Activated CD4-positive, alpha-beta memory T cell treated with anti-CD3 and anti-CD28 coated beads, Interleukin-2, amount 10 ng/mL, durations not matched to agents 7 days and 5 days (primary cell): ENCODE measurements at regions of chr4 and their contacts with region 1.

Region 1: DNA sequence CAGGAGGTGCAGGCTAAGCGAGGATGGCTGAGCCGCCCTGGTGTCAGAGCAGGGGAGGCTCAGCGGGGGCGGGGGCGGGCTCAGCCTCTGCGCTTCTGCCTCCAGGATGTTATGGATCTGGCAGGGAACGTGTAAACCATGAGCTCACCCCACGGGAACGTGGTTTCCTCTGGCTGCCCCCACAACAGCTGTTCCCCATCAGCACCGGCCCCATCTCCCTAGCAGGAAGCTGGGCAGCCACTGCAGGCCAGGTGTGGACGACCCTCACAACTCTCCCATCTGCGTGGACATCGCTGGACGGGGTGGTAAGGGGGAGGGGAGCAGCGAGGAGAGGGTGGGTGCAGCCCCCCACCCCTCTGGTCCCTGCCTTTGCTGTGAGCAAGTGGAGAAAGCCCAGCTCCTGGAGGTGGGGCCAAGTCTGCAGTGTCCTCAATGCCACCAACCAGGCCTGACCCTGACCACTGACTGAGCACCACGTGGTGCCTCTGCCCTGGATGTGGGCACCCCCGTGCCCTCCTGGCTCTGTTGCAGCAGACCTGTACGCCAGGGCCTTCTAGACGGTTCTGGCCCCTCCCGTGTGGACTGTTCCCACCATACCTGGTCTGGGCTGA is 28.1 kb upstream of the SPON2 start:
- DNase-seq: peak; percentile 20
- H3K4me3 Mint-ChIP-seq: peak overlapping the region; percentile 79
- H3K27ac Mint-ChIP-seq: peak overlapping the region; percentile 99
- H3K4me1 Mint-ChIP-seq: peaks cover 60% of the 10 kb centered on the region
- H3K27me3 Mint-ChIP-seq: no peaks in the 10 kb centered on the region

Region 2: GRCh38 chr4:1130316-1131186 is 70.0 kb before region 1 on chr4:
- CTCF ChIA-PET with region 1: interaction called, 10 read pairs
- POLR2A ChIA-PET with region 1: no interaction called
- DNase-seq: peak; percentile 81
- H3K4me3 Mint-ChIP-seq: no peak overlapping the region
- H3K27ac Mint-ChIP-seq: no peak overlapping the region
- H3K4me1 Mint-ChIP-seq: peaks cover 3% of the 10 kb centered on the region
- H3K27me3 Mint-ChIP-seq: peaks cover 19% of the 10 kb centered on the region

Region 3: GRCh38 chr4:1167247-1167949 is 33.1 kb before region 1 on chr4:
- CTCF ChIA-PET with region 1: interaction called, 29 read pairs
- POLR2A ChIA-PET with region 1: interaction called, 39 read pairs
- DNase-seq: peak; percentile 91
- H3K4me3 Mint-ChIP-seq: peak overlapping the region; percentile 78
- H3K27ac Mint-ChIP-seq: peak overlapping the region; percentile 63
- H3K4me1 Mint-ChIP-seq: peaks cover 33% of the 10 kb centered on the region
- H3K27me3 Mint-ChIP-seq: peaks cover 24% of the 10 kb centered on the region

Region 4: DNA sequence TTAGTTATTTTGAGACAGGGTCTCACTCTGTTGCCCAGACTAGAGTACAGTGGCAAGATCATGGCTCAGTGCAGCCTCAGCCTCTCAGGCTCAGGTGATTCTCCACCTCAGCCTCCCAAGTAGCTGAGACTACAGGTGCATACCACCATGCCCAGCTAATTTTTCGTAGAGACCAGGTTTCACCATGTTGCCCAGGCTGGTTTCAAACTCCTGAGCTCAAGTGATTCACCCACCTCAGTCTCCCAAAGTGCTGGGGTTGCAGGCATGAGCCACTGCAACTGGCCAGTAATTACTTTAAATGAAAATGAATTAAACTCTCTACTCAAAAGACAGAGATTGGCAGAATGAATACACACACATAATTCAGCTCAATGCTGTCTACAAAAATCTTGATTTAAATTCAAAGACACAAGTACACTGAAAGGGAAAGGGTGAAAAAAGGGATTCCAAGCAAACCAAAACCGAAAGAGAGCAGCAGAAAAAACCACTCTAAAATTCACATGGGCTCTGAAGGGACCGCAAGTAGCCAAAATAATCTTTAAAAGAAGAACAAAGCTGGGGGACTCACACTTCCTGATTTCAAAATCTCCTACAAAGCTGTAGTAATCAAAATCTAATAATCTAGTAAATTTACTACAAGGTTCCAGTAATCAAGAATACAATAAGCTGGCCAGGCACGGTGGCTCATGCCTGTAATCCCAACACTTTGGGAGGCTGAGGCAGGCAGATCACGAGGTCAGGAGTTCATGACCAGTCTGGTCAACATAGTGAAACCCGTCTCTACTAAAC is 16.4 kb before region 1 on chr4:
- CTCF ChIA-PET with region 1: interaction called, 16 read pairs
- POLR2A ChIA-PET with region 1: interaction called, 8 read pairs
- DNase-seq: peak; percentile 14
- H3K4me3 Mint-ChIP-seq: peak overlapping the region; percentile 7
- H3K27ac Mint-ChIP-seq: no peak overlapping the region
- H3K4me1 Mint-ChIP-seq: peaks cover 41% of the 10 kb centered on the region
- H3K27me3 Mint-ChIP-seq: peaks cover 15% of the 10 kb centered on the region

Region 5: GRCh38 chr4:1216869-1217294 is 16.4 kb after region 1 on chr4:
- CTCF ChIA-PET with region 1: interaction called, 10 read pairs
- POLR2A ChIA-PET with region 1: interaction called, 25 read pairs
- DNase-seq: peak; percentile 81
- H3K4me3 Mint-ChIP-seq: peak overlapping the region; percentile 46
- H3K27ac Mint-ChIP-seq: peak overlapping the region; percentile 77
- H3K4me1 Mint-ChIP-seq: peaks cover 39% of the 10 kb centered on the region
- H3K27me3 Mint-ChIP-seq: no peaks in the 10 kb centered on the region

Region 6: DNA sequence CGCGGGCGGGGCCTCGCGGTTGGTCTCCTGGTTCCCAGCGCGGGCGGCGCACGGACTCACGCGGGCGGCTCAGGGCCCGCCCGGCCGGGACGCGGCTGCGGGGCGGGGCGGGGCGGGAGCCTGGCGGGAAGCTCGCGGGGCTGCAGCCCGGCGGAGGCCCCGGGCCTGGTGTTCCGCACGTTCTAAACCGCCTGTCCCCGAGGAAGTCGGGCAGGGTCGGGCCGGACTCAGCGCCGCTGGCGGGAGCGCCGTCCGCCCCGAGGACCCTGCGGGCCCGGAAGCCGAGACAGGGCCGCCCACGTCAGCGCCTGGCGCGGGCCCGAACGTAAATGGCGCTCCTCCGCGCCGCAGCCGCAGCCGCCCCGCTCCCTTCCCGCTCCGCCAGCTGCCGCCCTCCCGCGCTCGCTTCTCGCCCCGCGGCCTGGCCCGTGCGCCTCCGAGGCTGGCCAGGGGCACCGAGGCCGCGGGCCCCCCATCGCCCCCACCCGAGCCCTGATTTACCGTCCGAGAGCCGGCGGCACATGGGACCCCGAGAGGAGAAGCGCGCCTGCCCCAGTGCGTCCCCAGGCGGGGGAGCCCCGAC is 48.7 kb after region 1 on chr4:
- CTCF ChIA-PET with region 1: interaction called, 7 read pairs
- POLR2A ChIA-PET with region 1: interaction called, 62 read pairs
- DNase-seq: peak; percentile 85
- H3K4me3 Mint-ChIP-seq: peak overlapping the region; percentile 85
- H3K27ac Mint-ChIP-seq: peak overlapping the region; percentile 95
- H3K4me1 Mint-ChIP-seq: peaks cover 73% of the 10 kb centered on the region
- H3K27me3 Mint-ChIP-seq: no peaks in the 10 kb centered on the region

Region 7: GRCh38 chr4:1289207-1290164 is 89.0 kb after region 1 on chr4 and contains the start of gene MAEA:
- CTCF ChIA-PET with region 1: no interaction called
- POLR2A ChIA-PET with region 1: interaction called, 22 read pairs
- DNase-seq: peak; percentile 98
- H3K4me3 Mint-ChIP-seq: peak within 1 kb of the TSS; percentile 94
- H3K27ac Mint-ChIP-seq: peak within 1 kb of the TSS; percentile 90
- H3K4me1 Mint-ChIP-seq: peaks cover 39% of the 10 kb centered on the region
- H3K27me3 Mint-ChIP-seq: no peaks in the 10 kb centered on the region
- total RNA-seq, gene MAEA: 61.6 to 64.1 TPM

Region 8: GRCh38 chr4:1395941-1396806 is 195.6 kb after region 1 on chr4:
- CTCF ChIA-PET with region 1: no interaction called
- POLR2A ChIA-PET with region 1: no interaction called
- DNase-seq: no peak
- H3K4me3 Mint-ChIP-seq: no peak overlapping the region
- H3K27ac Mint-ChIP-seq: no peak overlapping the region
- H3K4me1 Mint-ChIP-seq: no peaks in the 10 kb centered on the region
- H3K27me3 Mint-ChIP-seq: peaks cover 5% of the 10 kb centered on the region